Cardiac septum (tissue), 1 donor: ENCODE measurements at regions of chr18 and their contacts with region 1.

Region 1: DNA sequence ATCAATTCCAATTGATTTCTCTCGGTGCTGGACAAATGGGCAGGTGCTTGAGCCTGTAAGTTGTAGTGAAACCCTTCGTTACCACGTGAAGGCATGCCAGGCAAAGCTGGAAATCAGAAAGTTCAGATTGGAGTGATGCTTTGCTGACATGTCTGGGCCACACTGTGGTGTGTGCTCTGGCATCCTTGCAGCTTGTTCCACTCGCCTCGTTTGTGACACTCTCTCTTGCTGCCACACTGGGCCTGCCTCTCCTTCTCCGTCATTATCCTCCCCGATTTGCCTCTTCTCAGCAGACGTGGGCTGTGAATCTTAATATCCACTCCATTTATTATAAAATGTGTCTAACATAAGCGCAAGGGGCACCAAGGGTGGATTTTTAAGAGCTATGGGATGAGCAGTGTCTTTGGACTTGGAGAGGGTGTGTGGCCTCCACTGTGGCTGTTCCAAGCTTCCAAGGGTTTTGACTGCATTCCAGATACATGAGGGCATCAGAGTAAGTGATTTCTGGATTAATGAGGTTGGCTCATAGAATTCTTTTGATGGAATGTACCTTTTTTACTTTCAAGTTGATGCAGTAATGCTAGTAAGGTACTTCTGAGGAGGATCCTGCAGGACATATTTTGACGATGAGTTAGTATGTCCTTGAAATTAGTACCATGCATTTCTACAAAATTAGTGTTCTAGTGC is 238.8 kb downstream of the TPGS2 start:
- DNase-seq: no peak

Region 2: DNA sequence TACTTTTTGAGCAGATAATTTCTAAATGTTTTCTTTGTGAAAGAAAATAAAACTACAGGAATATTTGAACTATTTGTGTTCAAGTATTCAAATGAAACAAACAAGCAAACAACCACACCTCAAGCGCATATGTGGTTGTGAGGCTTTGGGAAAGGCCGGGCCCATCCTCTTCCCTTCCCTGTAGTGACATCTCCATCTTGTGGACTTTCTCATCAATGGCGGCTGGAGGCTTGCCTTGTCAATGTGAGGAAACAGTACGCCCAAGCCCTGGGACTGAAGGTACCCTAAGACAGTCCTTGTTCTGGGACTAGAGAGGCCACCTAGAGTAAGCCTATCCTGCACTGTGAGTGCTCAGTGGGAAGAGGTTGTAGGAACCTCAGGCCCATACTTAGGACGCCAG is 72.0 kb after region 1 on chr18:
- intact Hi-C with region 1: loop called (anchors 5 kb)
- DNase-seq: no peak